Posterior vena cava (tissue), 2 donors: ENCODE measurements at regions of chr7 and their contacts with region 1.

Region 1: GRCh38 chr7:66907731-66908130 is 13.3 kb upstream of the TMEM248 start:
- DNase-seq: no peak

Region 2: GRCh38 chr7:66204822-66205740 is 702.6 kb before region 1 on chr7 and contains the start of gene TPST1:
- intact Hi-C with region 1: no loop called
- DNase-seq: peak; percentile 95
- total RNA-seq, gene TPST1: 21.4 to 32.5 TPM

Region 3: DNA sequence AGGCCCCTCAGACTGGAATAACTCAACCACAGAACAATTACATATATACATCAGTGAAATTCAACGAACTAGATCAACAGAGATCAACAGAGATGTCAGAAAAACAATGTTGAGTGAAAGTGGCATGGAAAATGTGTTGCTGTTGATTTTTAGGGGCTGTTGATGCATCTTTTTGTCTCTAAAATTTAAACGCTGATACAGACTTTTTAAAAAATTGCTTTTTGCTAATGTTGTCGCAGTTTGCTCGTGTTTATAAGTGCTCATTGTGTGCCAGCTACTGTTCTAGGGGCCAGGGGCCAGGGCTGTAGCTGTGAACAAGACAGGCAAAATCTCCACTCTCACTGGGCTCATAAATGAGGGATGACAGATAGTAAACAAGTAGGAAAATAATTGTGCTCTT is 31.6 kb after region 1 on chr7:
- intact Hi-C with region 1: no loop called
- DNase-seq: no peak

Region 4: GRCh38 chr7:66950763-66951162 is 43.0 kb after region 1 on chr7:
- intact Hi-C with region 1: loop called in 1 of 2 experiments (anchors 1 kb)
- DNase-seq: peak; percentile 35